ENCODE measurements at regions of chr5 and their contacts with region 1.

Region 1: DNA sequence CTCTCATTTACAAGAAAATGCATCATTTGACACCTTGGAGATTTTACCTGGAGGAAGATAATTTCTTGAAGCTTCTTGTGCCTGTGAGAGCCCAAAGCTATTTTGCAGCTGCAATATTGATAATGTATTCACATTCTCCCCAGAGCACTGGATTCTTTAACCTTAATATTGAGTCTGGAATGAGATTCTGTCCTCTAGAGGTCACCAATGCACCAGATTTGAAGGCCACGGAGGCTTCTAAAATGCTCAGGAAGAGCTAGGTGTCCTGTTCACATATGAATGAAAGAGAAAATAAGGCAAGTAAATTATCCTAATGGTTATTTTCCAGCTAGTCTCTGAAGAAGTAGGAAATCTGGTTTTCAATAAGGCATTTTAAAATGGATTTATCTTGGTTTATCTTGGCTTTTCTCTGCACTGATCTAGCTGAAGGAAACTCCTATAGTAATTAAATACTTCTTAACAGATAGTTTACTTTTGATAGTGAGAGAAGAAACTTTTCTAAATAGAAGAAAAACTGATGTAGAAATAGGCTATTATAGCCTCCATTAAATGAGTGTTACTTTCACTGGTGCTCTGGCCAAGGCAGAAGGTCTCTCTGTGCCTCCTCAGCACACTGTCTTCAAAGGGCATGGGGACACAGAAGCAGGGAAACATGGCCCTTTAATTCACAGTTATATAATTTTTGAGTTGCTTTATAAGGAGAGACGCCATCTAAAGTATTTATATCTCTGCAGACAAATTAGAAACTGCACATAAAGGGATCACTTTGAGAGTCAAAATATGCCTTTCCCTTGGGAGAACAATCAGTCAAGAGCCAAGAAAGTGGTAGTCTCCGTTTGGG is 297.0 kb upstream of the ACTBL2 start:
- DNase-seq: peak; percentile 18 to 73 (median 43)
- H3K4me3 ChIP-seq: no peak overlapping the region
- H3K27ac ChIP-seq: no peak overlapping the region
- H3K4me1 ChIP-seq: peaks cover 0 to 14% of the 10 kb centered on the region in 2 donors
- H3K27me3 ChIP-seq: no peaks in the 10 kb centered on the region
- CTCF ChIP-seq: peak; percentile 19 to 68 (median 59)
- POLR2A ChIP-seq: no peak

Region 2: GRCh38 chr5:57499262-57500050 is 280.1 kb before region 1 on chr5:
- intact Hi-C with region 1: loop called in 1 of 2 experiments (anchors 10 kb)
- DNase-seq: peak in 1 of 7 donors; percentile 11
- H3K4me3 ChIP-seq: peak overlapping the region in 1 of 4 donors; percentile 33
- H3K27ac ChIP-seq: no peak overlapping the region
- H3K4me1 ChIP-seq: peaks cover 7 to 46% of the 10 kb centered on the region in 2 donors
- H3K27me3 ChIP-seq: no peaks in the 10 kb centered on the region
- CTCF ChIP-seq: peak; percentile 44 to 79 (median 68)
- POLR2A ChIP-seq: no peak

Region 3: GRCh38 chr5:57650360-57651069 is 129.1 kb before region 1 on chr5:
- intact Hi-C with region 1: loop called in 1 of 2 experiments (anchors 10 kb)
- DNase-seq: peak; percentile 30 to 77 (median 60)
- H3K4me3 ChIP-seq: no peak overlapping the region
- H3K27ac ChIP-seq: no peak overlapping the region
- H3K4me1 ChIP-seq: no peaks in the 10 kb centered on the region
- H3K27me3 ChIP-seq: no peaks in the 10 kb centered on the region
- CTCF ChIP-seq: peak; percentile 48 to 80 (median 75)
- POLR2A ChIP-seq: no peak